Activated CD8-positive, alpha-beta T cell treated with anti-CD3 and anti-CD28 coated beads for 36 hours (primary cell): ENCODE measurements at regions of chr14 and their contacts with region 1.

Region 1: DNA sequence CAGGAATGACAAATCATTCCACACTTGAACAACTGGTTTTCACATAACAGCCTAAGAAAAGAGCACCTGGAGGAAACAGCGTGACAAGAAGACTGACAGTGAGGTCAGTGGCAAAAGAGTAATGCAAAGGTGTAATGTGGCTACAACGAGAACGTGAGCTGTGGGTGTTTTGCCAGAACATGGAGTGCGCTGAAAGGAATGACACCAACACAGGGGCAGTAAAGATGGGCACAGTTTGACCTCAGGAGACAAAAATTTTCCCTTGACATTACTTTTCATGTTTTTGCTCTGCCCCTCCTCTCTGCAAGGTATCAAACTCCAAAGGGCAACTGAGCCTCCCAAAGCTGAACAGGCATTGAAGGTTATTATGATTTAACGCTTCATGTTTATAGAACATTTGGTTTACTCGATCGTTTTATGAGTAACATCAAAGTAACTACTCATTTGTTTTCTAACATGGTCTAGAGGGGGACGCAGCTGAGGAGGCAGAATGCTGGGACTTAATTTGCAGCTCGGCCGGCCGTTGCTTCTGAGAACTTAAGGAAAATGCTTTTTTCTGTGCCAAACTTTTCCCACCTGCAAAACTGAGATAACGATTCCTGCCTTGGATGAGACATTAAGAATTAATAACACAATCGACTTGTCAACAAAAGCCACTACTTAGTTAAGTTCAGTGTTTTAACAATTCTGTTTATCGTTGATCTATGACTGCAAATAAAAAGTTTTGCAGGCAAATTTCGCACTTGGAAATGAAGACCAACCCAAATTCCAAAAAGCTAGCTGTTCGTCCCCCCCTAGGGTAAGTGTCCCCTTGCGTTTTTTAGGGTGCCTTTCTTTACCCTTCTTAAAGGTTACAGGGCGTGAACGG is 954 bp downstream of the HAUS4 start:
- DNase-seq: no peak
- ATAC-seq: no peak
- H3K4me3 Mint-ChIP-seq: peak overlapping the region; percentile 93
- H3K27ac Mint-ChIP-seq: peak overlapping the region; percentile 93
- H3K4me1 Mint-ChIP-seq: peaks cover 25% of the 10 kb centered on the region
- H3K27me3 Mint-ChIP-seq: no peaks in the 10 kb centered on the region
- CTCF ChIP-seq: no peak

Region 2: GRCh38 chr14:22791301-22791700 is 164.6 kb before region 1 on chr14:
- CTCF ChIA-PET with region 1: no interaction called
- POLR2A ChIA-PET with region 1: no interaction called
- intact Hi-C with region 1: no loop called
- DNase-seq: no peak
- ATAC-seq: no peak
- H3K4me3 Mint-ChIP-seq: no peak overlapping the region
- H3K27ac Mint-ChIP-seq: no peak overlapping the region
- H3K4me1 Mint-ChIP-seq: peaks cover 6% of the 10 kb centered on the region
- H3K27me3 Mint-ChIP-seq: peaks cover 10% of the 10 kb centered on the region
- CTCF ChIP-seq: no peak

Region 3: GRCh38 chr14:22814941-22815713 is 140.8 kb before region 1 on chr14 and contains the start of gene SLC7A7:
- CTCF ChIA-PET with region 1: no interaction called
- POLR2A ChIA-PET with region 1: no interaction called
- intact Hi-C with region 1: no loop called
- DNase-seq: no peak
- ATAC-seq: no peak
- H3K4me3 Mint-ChIP-seq: no peak within 1 kb of the TSS
- H3K27ac Mint-ChIP-seq: no peak within 1 kb of the TSS
- H3K4me1 Mint-ChIP-seq: peaks cover 12% of the 10 kb centered on the region
- H3K27me3 Mint-ChIP-seq: peaks cover 2% of the 10 kb centered on the region
- CTCF ChIP-seq: no peak
- total RNA-seq, gene SLC7A7: 0.45 TPM in 1 of 2 experiments, not detected in the other

Region 4: GRCh38 chr14:22829661-22830442 is 126.1 kb before region 1 on chr14 and contains the start of gene MRPL52:
- CTCF ChIA-PET with region 1: no interaction called
- POLR2A ChIA-PET with region 1: no interaction called
- intact Hi-C with region 1: no loop called
- DNase-seq: peak; percentile 94
- ATAC-seq: peak; percentile 93
- H3K4me3 Mint-ChIP-seq: peak within 1 kb of the TSS; percentile 88
- H3K27ac Mint-ChIP-seq: peak within 1 kb of the TSS; percentile 98
- H3K4me1 Mint-ChIP-seq: peaks cover 22% of the 10 kb centered on the region
- H3K27me3 Mint-ChIP-seq: peaks cover 2% of the 10 kb centered on the region
- CTCF ChIP-seq: no peak
- total RNA-seq, gene MRPL52: 122 to 126 TPM

Region 5: DNA sequence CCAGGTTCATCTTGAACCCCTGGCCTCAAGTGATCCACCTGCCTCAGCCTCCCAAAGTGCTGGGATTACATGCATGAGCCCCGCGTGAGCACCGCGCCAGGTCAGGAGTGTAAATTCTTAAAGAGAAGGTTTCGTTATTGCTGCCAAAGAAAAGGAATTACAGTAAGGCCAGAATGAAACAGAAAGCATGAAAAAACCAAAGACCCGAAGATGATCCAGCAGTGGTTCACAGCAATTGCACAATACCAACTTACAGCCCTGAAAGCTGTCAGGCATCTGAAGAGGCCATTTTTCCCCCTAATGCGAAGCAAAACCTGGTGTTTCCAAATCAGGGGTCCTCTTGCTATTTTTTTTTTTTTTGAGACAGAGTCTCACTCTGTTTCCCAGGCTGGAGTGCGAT is 47.3 kb before region 1 on chr14:
- CTCF ChIA-PET with region 1: no interaction called
- POLR2A ChIA-PET with region 1: no interaction called
- intact Hi-C with region 1: no loop called
- DNase-seq: no peak
- ATAC-seq: no peak
- H3K4me3 Mint-ChIP-seq: no peak overlapping the region
- H3K27ac Mint-ChIP-seq: no peak overlapping the region
- H3K4me1 Mint-ChIP-seq: peaks cover 20% of the 10 kb centered on the region
- H3K27me3 Mint-ChIP-seq: no peaks in the 10 kb centered on the region
- CTCF ChIP-seq: no peak

Region 6: DNA sequence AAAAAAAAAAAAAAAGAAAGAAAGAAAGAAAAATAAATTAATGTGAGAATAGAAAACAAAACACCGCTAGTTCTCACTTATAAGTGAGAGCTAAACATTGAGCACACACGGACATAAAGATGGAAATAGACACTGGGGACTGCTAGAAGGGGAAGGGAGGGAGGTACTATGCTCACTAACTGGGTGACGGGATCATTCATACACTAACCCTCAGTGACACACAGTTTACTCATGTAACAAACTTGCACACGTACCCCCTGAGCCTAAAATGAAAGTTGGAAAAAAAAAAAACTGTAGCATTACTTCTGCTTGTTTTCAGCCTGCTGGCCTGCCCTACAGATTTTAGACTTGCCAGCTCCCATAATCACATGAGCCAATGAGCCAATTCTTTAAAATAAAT is 16.3 kb before region 1 on chr14:
- CTCF ChIA-PET with region 1: interaction called, 14 read pairs
- POLR2A ChIA-PET with region 1: interaction called, 4 read pairs
- intact Hi-C with region 1: no loop called
- DNase-seq: no peak
- ATAC-seq: no peak
- H3K4me3 Mint-ChIP-seq: no peak overlapping the region
- H3K27ac Mint-ChIP-seq: no peak overlapping the region
- H3K4me1 Mint-ChIP-seq: no peaks in the 10 kb centered on the region
- H3K27me3 Mint-ChIP-seq: no peaks in the 10 kb centered on the region
- CTCF ChIP-seq: no peak

Region 7: GRCh38 chr14:22973217-22974032 is 17.5 kb after region 1 on chr14:
- CTCF ChIA-PET with region 1: interaction called, 31 read pairs
- POLR2A ChIA-PET with region 1: no interaction called
- intact Hi-C with region 1: no loop called
- DNase-seq: peak; percentile 56
- ATAC-seq: peak; percentile 69
- H3K4me3 Mint-ChIP-seq: no peak overlapping the region
- H3K27ac Mint-ChIP-seq: no peak overlapping the region
- H3K4me1 Mint-ChIP-seq: no peaks in the 10 kb centered on the region
- H3K27me3 Mint-ChIP-seq: no peaks in the 10 kb centered on the region
- CTCF ChIP-seq: peak; percentile 80